HEK293 (cell line): ENCODE measurements at regions of chr10 and their contacts with region 1.

Region 1: GRCh38 chr10:116385994-116386809 is 41.4 kb upstream of the PNLIPRP3 start:
- H3K4me3 ChIP-seq: no peak overlapping the region
- H3K27ac ChIP-seq: no peak overlapping the region
- H3K4me1 ChIP-seq: no peaks in the 10 kb centered on the region
- CTCF ChIP-seq: 0 out of 2 replicates have a peak, but pooled peaks have one; percentile 22

Region 2: GRCh38 chr10:115706026-115706781 is 680.0 kb before region 1 on chr10:
- CTCF ChIA-PET with region 1: interaction called, 33 read pairs
- POLR2A ChIA-PET with region 1: no interaction called
- H3K4me3 ChIP-seq: no peak overlapping the region
- H3K27ac ChIP-seq: no peak overlapping the region
- H3K4me1 ChIP-seq: no peaks in the 10 kb centered on the region
- CTCF ChIP-seq: 0 out of 2 replicates have a peak, but pooled peaks have one; percentile 11

Region 3: GRCh38 chr10:116324951-116325635 is 61.1 kb before region 1 on chr10:
- CTCF ChIA-PET with region 1: interaction called, 10 read pairs
- POLR2A ChIA-PET with region 1: no interaction called
- H3K4me3 ChIP-seq: no peak overlapping the region
- H3K27ac ChIP-seq: no peak overlapping the region
- H3K4me1 ChIP-seq: no peaks in the 10 kb centered on the region
- CTCF ChIP-seq: no peak

Region 4: DNA sequence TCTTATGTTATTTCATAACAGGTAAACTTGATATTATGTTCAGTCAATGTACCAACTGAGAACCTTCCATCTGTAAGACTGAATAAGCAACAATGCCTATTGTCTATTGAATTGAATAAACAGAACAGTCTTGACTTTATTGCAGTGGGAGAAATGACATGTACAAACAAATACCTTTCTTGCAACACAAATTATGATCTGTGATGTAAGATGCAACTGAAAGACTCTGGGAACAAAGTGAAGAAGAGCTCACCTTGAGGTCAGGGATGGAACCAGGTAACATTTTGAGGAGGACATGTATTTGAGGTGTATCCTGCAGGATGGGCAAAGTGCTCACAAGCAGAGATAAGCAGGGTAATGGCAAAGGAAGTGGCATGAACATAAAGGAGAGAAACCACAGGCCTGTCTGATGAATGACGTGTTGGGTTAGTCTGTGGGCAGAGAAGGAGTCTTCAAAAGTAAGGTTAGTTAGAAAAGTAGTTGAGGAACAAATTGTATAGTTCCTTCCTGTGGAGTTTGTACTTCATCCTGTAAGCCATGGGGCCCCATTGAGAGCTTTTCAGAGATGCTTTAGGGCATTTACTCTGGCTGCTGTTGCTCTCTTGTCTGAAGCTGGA is 51.0 kb after region 1 on chr10:
- CTCF ChIA-PET with region 1: no interaction called
- POLR2A ChIA-PET with region 1: no interaction called
- H3K4me3 ChIP-seq: no peak overlapping the region
- H3K27ac ChIP-seq: no peak overlapping the region
- H3K4me1 ChIP-seq: no peaks in the 10 kb centered on the region
- CTCF ChIP-seq: no peak